ENCODE measurements at regions of chr2 and their contacts with region 1.

Region 1: DNA sequence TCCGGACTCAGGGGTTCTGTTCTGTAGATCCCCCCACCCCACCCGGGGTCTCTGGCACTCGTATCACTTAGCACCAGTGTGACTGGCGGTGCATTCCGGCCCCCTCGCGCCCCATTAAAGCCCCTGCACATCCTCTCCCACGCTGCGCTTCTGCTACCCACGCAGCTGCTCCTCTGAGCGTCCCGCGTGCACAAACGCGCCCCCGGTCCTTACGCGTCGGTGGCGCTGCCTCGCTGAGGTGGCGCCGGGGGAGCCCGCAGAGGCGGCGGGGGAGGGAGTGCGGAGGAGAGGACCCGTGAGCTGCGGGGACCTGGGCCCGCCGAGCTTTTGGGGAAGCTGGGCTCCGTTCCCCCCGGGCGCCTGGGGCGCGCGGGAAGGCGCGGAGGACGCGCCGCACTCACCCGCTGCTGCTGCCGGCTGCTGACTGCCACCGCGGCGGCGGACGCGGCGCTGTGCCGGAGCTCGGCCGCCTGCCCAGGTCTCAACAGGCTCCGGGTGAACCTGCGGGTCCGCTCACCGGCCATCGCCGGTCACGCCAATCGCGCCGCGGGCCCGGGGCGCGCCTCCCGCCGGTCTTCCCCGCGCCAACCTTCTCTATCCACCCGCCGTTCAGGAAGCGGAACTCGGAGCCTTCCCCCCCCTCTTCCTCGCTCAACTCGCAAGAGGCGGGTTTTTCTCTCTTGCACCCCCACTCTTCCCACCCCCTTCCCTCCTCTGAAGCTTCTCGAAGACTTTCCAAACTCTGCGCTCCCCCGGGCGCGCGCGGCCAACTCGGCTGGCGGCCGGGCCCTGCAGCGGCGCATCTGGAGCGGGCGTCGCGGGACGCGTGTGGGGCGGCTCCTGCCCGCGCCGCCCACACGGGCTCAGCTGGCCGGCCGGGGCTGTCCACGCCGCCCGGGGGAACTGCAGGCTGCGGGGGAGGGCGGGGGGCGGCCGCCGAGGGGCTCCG is at the start of gene DOCK10:
- DNase-seq: peak; percentile 87
- H3K4me3 Mint-ChIP-seq: peak within 1 kb of the TSS; percentile 94
- H3K27ac Mint-ChIP-seq: peak within 1 kb of the TSS; percentile 98
- H3K4me1 Mint-ChIP-seq: peaks cover 49% of the 10 kb centered on the region
- H3K27me3 Mint-ChIP-seq: peaks cover 31% of the 10 kb centered on the region
- total RNA-seq, gene DOCK10: 137 and 138 TPM in 2 replicates

Region 2: GRCh38 chr2:223957092-223957851 is 1084.9 kb before region 1 on chr2 and contains the start of gene MRPL44:
- intact Hi-C with region 1: loop called (anchors 5 kb)
- DNase-seq: peak; percentile 100
- H3K4me3 Mint-ChIP-seq: peak within 1 kb of the TSS; percentile 95
- H3K27ac Mint-ChIP-seq: peak within 1 kb of the TSS; percentile 95
- H3K4me1 Mint-ChIP-seq: peaks cover 62% of the 10 kb centered on the region
- H3K27me3 Mint-ChIP-seq: no peaks in the 10 kb centered on the region
- total RNA-seq, gene MRPL44: 37.3 and 37.4 TPM in 2 replicates

Region 3: GRCh38 chr2:224585205-224586088 is 456.7 kb before region 1 on chr2 and contains the start of gene CUL3:
- intact Hi-C with region 1: loop called (anchors 5 kb)
- DNase-seq: peak; percentile 100
- H3K4me3 Mint-ChIP-seq: peak within 1 kb of the TSS; percentile 98
- H3K27ac Mint-ChIP-seq: peak within 1 kb of the TSS; percentile 95
- H3K4me1 Mint-ChIP-seq: peaks cover 28% of the 10 kb centered on the region
- H3K27me3 Mint-ChIP-seq: no peaks in the 10 kb centered on the region
- total RNA-seq, gene CUL3: 92.6 and 97.3 TPM in 2 replicates

Region 4: DNA sequence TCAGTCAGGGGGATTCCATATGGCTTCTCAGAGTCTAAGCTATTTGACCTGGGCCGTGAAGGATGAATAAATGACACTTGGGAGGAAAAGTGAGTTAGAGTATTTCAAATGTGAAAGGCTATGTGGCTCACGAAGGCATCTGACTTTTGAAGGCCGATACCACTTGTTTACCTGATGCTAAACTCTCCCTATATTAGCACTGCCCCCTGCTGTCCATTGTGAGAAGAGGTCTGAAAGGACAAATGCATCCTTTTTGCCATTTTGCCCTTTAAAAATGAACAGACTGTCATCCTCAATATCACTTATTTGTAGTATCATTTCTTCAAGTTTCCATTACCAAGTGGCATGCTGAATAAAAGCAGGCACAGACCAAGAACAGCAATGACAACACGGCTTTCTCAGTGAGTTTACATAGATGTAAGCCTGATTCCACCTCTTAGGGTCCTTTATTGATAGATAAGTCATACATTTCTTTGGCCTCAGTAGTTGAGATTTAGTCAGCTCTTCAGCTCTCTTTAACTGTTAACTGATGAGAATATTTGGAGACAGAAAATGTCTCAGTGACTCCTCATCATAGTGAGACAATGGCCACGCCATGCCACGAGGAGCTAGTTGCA is 40.0 kb before region 1 on chr2:
- intact Hi-C with region 1: loop called (anchors 2 kb)
- DNase-seq: peak; percentile 89
- H3K4me3 Mint-ChIP-seq: peak overlapping the region; percentile 63
- H3K27ac Mint-ChIP-seq: peak overlapping the region; percentile 73
- H3K4me1 Mint-ChIP-seq: peaks cover 65% of the 10 kb centered on the region
- H3K27me3 Mint-ChIP-seq: no peaks in the 10 kb centered on the region

Region 5: GRCh38 chr2:225025917-225026571 is 16.1 kb before region 1 on chr2:
- intact Hi-C with region 1: loop called (anchors 2 kb)
- DNase-seq: peak; percentile 69
- H3K4me3 Mint-ChIP-seq: peak overlapping the region; percentile 26
- H3K27ac Mint-ChIP-seq: peak overlapping the region; percentile 42
- H3K4me1 Mint-ChIP-seq: peaks cover 56% of the 10 kb centered on the region
- H3K27me3 Mint-ChIP-seq: no peaks in the 10 kb centered on the region

Region 6: DNA sequence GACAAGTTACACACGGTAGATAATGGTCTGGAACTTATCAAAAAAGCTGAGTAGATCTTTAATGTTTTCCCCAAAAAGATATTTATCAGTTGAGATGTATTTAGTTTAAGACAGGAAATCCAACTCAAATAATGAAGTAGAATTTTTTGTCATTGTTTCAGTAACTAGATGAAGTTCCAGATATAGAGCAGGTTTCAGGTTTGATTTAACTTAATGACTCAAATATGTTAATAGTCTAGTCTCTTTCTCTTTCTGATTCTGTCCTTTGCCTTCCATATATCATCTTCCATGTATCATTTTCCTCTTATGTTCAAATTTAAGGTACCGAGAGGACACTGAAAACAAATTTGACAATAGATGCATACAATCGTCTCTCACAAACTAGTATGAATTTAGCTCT is 23.8 kb after region 1 on chr2:
- intact Hi-C with region 1: loop called (anchors 1 kb)
- DNase-seq: no peak
- H3K4me3 Mint-ChIP-seq: no peak overlapping the region
- H3K27ac Mint-ChIP-seq: no peak overlapping the region
- H3K4me1 Mint-ChIP-seq: peaks cover 22% of the 10 kb centered on the region
- H3K27me3 Mint-ChIP-seq: peaks cover 6% of the 10 kb centered on the region